ENCODE measurements at regions of chr12 and their contacts with region 1.

Region 1: GRCh38 chr12:52278541-52279421 is 4.3 kb downstream of the KRT86 start:
- DNase-seq: no peak
- H3K4me3 ChIP-seq: no peak overlapping the region
- H3K27me3 ChIP-seq: no peaks in the 10 kb centered on the region
- CTCF ChIP-seq: peak; percentile 99

Region 2: DNA sequence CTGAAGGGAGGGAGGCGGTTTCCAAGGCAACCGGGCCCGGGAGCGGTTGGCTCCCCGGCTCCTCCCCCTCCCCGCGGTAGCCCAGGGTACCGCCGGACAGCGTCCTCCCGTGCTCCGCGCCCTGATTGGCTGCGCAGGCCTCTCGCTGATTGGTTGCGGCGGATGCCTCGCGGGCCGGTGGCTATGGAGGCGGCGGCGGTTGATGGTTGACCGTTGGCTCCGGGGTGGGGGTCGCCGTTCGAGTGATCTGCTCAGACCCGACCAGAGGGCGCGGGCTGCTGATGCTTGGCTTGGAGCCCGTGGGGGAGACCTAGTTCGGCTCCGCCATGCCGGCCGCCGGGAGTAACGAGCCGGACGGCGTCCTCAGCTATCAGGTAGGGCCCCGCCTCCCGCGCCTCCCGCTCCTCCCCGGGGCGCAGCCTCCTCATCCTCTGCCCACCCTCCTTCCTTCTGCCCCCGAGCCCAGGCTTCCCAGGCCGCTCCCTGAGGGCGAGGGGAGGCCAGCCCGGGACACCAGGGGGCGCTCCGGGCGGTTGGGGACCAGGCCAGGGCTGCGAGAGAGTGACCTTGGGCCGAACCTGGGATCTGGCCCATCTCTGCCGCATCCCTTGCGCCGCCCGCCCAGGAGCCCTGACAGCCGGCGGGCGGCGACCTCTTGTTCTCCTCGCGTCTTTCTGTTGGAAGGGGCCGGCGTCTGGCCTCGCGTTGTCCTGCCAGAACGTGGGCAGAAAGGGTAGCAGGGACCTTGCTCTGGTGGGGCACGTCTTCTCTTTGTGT is 853.9 kb before region 1 on chr12 and contains the start of gene SLC4A8:
- CTCF ChIA-PET with region 1: no interaction called
- POLR2A ChIA-PET with region 1: no interaction called
- DNase-seq: no peak
- H3K4me3 ChIP-seq: peak within 1 kb of the TSS; percentile 77
- H3K27me3 ChIP-seq: no peaks in the 10 kb centered on the region
- CTCF ChIP-seq: peak; percentile 96
- polyA plus RNA-seq, gene SLC4A8: 4.9 and 7.3 TPM in 2 replicates

Region 3: GRCh38 chr12:52192173-52192791 is 86.5 kb before region 1 on chr12:
- CTCF ChIA-PET with region 1: interaction called, 11 read pairs
- POLR2A ChIA-PET with region 1: interaction called, 11 read pairs
- DNase-seq: peak; percentile 92
- H3K4me3 ChIP-seq: no peak overlapping the region
- H3K27me3 ChIP-seq: no peaks in the 10 kb centered on the region
- CTCF ChIP-seq: no peak

Region 4: DNA sequence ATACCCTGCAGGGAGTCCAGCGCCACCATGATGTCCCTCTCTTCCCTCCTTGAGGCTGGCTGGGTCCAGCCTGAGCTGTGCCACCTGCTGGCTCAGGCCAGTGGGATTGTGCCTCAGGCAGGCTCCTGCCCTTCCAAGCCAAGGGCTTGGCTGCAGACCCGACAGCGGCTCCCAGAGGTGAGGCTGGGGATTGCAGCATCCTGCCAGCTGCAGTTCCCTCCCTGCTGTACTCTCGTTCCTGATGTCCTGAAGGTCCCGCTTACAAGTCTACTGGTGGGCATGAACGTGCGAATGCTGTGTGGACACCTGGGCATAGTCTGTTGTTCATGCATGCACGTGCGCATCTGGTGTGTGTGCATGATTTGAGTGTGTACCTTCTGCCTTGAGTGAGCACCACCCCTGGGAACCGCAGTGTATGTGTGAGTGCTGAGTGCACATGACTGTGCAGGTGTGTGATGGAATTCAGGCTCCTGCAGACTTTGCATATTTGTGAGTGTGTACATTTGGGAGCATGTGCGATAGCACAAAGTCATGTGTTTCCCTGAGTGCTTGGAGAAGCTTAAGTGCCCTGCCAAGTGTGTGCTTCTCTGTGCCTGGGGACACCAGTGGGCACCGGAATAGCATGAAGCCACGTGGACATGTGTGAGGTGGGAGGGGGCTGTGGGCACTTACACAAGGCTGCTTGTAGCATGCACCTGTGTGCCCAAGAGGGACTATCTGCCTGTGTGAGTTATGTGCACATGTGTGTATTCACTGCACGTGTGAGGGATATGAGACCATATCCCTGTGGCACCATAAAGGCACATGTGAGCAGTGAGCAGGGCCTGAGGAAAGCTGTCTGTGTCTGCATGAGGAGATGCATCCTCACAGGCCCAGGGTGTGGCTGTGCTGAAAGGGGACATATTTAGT is 65.0 kb before region 1 on chr12:
- CTCF ChIA-PET with region 1: interaction called, 39 read pairs
- POLR2A ChIA-PET with region 1: no interaction called
- DNase-seq: no peak
- H3K4me3 ChIP-seq: no peak overlapping the region
- H3K27me3 ChIP-seq: no peaks in the 10 kb centered on the region
- CTCF ChIP-seq: peak; percentile 100

Region 5: DNA sequence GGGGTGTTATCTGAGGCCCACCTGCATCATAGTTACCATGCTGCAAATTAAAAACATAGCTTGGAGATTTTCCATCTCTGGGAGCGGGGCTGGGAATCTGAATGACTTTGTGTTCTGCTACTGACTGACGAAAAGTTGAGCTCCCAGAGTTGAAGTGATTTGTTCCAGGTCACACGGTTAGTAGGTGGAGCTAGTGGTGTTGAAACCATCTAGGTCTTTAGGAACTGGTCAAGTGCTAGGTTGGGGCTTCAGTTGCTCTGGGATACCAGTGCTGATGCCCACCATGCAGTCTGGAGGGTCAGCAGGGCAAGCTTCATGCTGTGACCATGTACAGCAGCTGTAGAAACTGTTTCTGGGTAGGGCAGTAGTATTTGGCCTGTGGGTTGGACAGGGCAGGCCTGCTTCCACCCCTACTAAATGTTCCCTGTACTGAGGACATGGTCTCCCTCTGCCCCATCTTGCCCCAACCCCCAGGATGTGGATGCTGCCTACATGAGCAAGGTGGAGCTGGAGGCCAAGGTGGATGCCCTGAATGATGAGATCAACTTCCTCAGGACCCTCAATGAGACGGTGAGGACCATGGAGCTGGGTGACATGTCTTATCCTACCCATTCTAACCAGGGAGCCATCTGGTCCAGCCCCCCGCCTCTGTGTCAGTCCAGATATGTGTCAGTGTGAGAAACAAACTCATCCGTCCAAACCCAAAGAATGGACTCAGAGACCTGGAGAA is 40.4 kb before region 1 on chr12:
- CTCF ChIA-PET with region 1: interaction called, 19 read pairs
- POLR2A ChIA-PET with region 1: interaction called, 16 read pairs
- DNase-seq: no peak
- H3K4me3 ChIP-seq: no peak overlapping the region
- H3K27me3 ChIP-seq: no peaks in the 10 kb centered on the region
- CTCF ChIP-seq: no peak

Region 6: DNA sequence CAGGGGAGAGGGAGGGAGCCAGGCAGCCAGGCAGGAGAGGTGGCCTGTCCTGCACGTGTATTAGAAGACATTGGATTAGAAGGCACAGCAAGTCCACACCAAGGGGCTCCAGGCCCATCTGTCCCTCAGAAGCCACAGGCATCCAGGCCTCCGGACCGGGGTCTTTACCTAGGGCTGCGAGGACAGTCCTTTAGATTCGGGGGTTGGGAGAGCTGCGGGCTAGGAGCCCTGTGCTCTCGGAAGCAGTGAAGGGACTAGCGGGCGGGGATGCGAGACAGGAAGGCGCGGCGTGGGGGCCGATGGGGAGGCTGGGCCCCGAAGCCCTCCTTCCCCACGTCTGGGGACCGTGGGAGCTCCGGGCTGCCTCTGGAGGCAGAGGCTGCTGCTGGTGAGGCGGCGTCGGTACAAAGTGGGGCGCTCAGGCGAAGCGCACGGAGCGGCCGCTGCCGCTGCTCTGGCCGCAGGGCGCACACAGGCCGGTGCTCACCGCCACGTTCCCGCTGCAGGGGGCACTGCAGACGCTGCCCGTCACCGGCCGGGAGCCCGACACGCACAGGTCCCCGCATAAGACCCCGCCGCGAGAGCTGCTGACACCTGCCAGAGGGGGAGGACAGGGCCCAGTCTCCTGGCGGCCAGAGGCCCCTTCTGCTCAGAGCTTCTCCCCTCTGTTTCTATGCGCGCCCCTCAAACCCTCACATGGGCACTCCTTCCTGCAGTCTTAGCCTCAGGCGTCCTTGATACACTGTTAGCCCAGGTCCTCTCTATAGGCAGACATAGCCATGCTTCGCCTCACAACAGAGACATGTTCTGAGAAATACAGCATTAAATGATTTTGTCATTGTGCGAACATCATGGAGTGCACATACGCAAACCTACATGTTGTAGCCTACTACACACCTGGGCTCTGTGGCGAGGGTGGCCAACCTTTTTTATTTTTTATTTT is 28.5 kb before region 1 on chr12:
- CTCF ChIA-PET with region 1: interaction called, 19 read pairs
- POLR2A ChIA-PET with region 1: no interaction called
- DNase-seq: no peak
- H3K4me3 ChIP-seq: no peak overlapping the region
- H3K27me3 ChIP-seq: no peaks in the 10 kb centered on the region
- CTCF ChIP-seq: no peak

Region 7: GRCh38 chr12:52307836-52308805 is 29.3 kb after region 1 on chr12:
- CTCF ChIA-PET with region 1: interaction called, 14 read pairs
- POLR2A ChIA-PET with region 1: no interaction called
- DNase-seq: no peak
- H3K4me3 ChIP-seq: peak overlapping the region; percentile 42
- H3K27me3 ChIP-seq: no peaks in the 10 kb centered on the region; the same call in 1 of the 2 replicates
- CTCF ChIP-seq: peak; percentile 21; the same call in 1 of the 2 replicates

Region 8: GRCh38 chr12:52423661-52424500 is 145.1 kb after region 1 on chr12:
- CTCF ChIA-PET with region 1: no interaction called
- POLR2A ChIA-PET with region 1: no interaction called
- DNase-seq: no peak
- H3K4me3 ChIP-seq: no peak overlapping the region
- H3K27me3 ChIP-seq: peaks cover 12% of the 10 kb centered on the region
- CTCF ChIP-seq: no peak